Left lung (tissue), 14 donors: ENCODE measurements at regions of chr18 and their contacts with region 1.

Region 1: DNA sequence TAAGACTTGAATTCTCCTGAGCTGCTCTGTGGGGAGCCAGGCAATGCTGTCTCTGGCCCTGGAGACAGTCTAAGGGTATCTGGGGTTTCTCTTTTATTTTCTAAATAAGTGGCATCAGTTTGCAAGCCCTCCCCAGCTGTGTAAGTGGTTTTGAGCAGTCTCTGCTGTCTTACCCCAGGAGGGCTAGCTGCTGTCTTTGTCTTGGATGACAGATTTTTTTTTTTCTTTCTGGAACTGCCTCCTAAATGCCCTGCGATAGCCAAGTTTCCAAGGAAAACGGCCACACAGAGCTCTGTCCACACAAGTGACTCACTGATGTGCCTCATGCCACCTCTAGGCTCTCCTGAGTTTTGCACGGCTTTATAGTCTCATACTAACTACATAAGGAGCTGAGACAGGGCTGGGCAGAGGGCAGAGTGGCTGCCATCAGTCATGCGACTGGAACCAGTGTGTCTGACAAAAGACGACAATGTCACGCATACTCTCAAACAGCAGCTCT is 37.2 kb upstream of the THOC1 start:
- DNase-seq: peak in 1 of 4 donors; percentile 26
- ATAC-seq: no peak
- H3K4me3 ChIP-seq: no peak overlapping the region
- H3K27ac ChIP-seq: no peak overlapping the region
- H3K4me1 ChIP-seq: no peaks in the 10 kb centered on the region
- H3K27me3 ChIP-seq: no peaks in the 10 kb centered on the region
- CTCF ChIP-seq: no peak

Region 2: DNA sequence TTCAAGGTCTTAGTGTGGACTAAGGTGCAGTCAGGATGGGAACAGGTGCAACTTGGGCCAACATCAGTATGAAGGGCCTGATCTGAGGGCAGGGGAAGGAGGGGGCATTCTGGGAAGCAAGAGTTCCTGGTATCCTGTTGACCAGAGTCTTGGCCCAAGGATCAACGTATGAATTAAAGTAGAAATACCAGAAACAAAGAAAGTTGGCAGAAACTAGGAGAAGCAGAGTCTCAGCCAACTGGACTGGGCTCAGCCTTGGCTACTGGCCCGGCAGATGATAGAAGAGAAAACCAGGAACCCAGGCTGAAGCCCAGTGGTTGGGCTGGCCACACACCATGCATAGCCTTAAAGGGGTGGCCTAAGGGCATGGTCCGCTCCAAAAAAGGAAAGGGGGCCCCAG is 277.4 kb after region 1 on chr18:
- intact Hi-C with region 1: loop called in 1 of 2 experiments (anchors 10 kb)
- DNase-seq: no peak
- ATAC-seq: no peak
- H3K4me3 ChIP-seq: no peak overlapping the region
- H3K27ac ChIP-seq: no peak overlapping the region
- H3K4me1 ChIP-seq: peaks cover 0 to 2% of the 10 kb centered on the region in 2 donors
- H3K27me3 ChIP-seq: no peaks in the 10 kb centered on the region
- CTCF ChIP-seq: no peak